Heart right ventricle (tissue), 16 donors: ENCODE measurements at regions of chr4 and their contacts with region 1.

Region 1: DNA sequence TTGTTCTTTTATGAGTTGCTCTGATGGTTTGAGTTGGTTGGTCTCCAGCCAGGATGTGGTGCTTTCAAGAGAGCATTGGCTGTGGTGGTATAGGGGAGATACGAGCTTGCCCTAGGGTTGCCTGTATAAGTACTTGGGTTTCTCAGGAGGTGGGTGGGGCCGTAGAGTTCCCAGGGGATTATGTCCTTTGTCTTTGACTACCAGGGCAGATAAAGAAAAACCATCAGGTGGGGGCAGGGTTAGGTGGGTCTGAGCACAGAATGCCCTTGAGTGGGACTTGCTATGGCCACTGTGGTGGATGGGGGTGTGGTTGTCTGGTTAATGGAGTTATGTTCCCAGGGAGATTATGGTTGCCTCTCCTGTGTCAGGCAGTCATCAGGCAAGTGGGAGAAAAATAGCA is 247.9 kb upstream of the HAND2 start:
- DNase-seq: no peak
- ATAC-seq: no peak
- H3K4me3 ChIP-seq: no peak overlapping the region
- H3K27ac ChIP-seq: no peak overlapping the region
- H3K4me1 ChIP-seq: no peaks in the 10 kb centered on the region
- H3K27me3 ChIP-seq: no peaks in the 10 kb centered on the region
- CTCF ChIP-seq: no peak

Region 2: DNA sequence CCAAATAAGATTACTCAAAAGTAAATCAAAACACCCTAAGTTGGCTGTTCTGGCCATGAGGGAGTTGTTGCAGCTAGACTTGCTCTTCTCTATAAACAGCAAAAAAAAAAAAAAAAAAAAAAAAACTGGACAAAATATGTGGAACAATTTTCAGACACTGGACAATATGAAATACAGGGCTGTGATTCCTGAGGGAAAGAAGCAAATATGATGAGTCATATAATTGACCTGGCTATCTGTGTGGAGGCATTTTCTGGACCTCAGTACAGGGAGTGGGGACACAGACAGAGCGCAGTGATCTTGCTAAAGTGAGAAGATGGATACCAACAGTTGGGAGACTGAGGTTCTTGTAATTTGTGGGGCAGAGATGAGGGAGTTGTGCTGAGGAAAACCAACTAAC is 55.8 kb before region 1 on chr4:
- intact Hi-C with region 1: no loop called
- DNase-seq: no peak
- ATAC-seq: no peak
- H3K4me3 ChIP-seq: no peak overlapping the region
- H3K27ac ChIP-seq: no peak overlapping the region
- H3K4me1 ChIP-seq: no peaks in the 10 kb centered on the region
- H3K27me3 ChIP-seq: no peaks in the 10 kb centered on the region
- CTCF ChIP-seq: no peak

Region 3: DNA sequence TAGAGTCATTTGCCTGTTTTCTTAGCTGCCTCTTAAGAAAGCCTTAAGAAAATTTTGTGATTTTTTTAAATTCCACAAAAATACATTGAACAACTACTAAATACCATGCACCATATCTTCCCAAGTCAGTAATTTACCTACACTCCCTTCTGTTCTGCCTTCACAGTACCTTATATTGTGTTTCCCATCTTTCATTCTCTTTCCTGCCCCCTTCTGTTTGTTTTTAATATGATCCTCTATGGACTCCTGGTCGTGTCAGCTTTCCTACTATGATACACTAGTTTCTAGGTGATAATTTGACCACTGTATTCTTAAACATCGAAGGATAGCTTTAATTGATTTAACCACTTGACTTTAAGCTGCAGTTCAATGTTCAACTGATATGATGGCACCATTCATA is 49.8 kb after region 1 on chr4:
- intact Hi-C with region 1: loop called in 1 of 10 experiments (anchors 10 kb)
- DNase-seq: no peak
- ATAC-seq: peak in 1 of 8 donors; percentile 41
- H3K4me3 ChIP-seq: no peak overlapping the region
- H3K27ac ChIP-seq: no peak overlapping the region
- H3K4me1 ChIP-seq: no peaks in the 10 kb centered on the region
- H3K27me3 ChIP-seq: no peaks in the 10 kb centered on the region
- CTCF ChIP-seq: peak in 3 of 9 donors; percentile 7 to 36 (median 23)

Region 4: GRCh38 chr4:174086829-174087799 is 309.2 kb after region 1 on chr4:
- intact Hi-C with region 1: no loop called
- DNase-seq: no peak
- ATAC-seq: peak in 3 of 8 donors; percentile 25 to 60 (median 56)
- H3K4me3 ChIP-seq: peak overlapping the region in 1 of 10 donors; percentile 16
- H3K27ac ChIP-seq: no peak overlapping the region
- H3K4me1 ChIP-seq: peaks cover 0 to 9% (median 0%) of the 10 kb centered on the region in 9 donors
- H3K27me3 ChIP-seq: peaks cover 0 to 5% (median 0%) of the 10 kb centered on the region in 7 donors
- CTCF ChIP-seq: no peak